ENCODE measurements at regions of chr2 and their contacts with region 1.

Region 1: DNA sequence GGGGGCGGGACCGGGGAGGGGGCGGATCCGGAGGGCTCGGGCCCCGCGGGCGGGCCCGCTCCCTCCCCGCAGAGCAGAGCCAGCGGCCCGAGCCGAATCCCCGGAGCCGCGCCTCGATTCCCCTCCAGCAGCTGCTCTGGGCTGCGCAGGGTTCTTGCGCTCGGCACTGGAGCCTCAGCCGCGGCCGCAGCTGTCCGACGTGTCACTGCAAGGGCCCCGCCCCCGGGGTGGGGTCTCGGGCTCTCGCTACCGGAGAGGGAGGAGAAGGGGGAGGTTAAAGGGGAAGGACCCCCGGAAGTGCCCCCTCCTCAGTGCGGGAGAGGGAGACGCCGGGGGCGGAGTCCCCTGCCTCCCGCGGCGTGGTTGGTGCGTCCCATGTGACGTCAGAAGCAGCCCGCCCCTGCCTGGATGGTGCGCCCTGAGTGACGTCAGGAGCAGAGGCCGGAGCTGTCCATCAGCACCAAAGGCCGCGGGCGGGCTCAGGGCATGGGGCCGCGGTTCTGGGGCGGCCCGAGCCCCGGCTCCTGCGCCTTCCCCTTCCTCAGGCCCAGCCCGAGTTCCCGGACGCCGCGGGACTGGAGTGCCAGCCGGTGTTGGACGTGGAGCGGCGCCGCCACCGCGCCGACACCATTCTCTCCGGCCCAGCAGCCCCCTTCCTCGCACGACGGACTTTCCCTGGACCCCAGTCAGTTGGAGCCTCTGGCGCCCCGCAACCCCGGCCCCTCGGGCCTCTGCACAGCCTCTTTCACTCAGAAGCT is at the starts of genes CHPF and TMEM198:
- DNase-seq: peak; percentile 87 to 96
- ATAC-seq: peak; percentile 66 to 78
- H3K4me3 ChIP-seq: peak within 1 kb of the TSS; percentile 61
- H3K27ac ChIP-seq: peak within 1 kb of the TSS; percentile 58 to 89
- H3K4me1 ChIP-seq: peaks cover 12% of the 10 kb centered on the region
- CTCF ChIP-seq: no peak
- EP300 ChIP-seq: no peak
- POLR2A ChIP-seq: no peak; the same call in 1 of the 2 replicates
- RAD21 ChIP-seq: no peak
- polyA plus RNA-seq, gene CHPF: 9.0 and 10.2 TPM in 2 replicates
- polyA plus RNA-seq, gene TMEM198: 0.31 and 0.33 TPM in 2 replicates

Region 2: GRCh38 chr2:219521066-219521880 is 22.5 kb before region 1 on chr2:
- CTCF ChIA-PET with region 1: interaction called, 164 read pairs
- POLR2A ChIA-PET with region 1: no interaction called
- DNase-seq: peak; percentile 60 to 87
- ATAC-seq: peak; percentile 76 to 94
- H3K4me3 ChIP-seq: 0 out of 3 replicates have a peak overlapping the region, but pooled peaks have one; percentile 9
- H3K27ac ChIP-seq: peak overlapping the region; percentile 15 to 80; a peak in 4 of 6 replicates
- H3K4me1 ChIP-seq: peaks cover 17% of the 10 kb centered on the region
- CTCF ChIP-seq: peak; percentile 70
- EP300 ChIP-seq: no peak
- POLR2A ChIP-seq: no peak
- RAD21 ChIP-seq: peak; percentile 57 to 60

Region 3: DNA sequence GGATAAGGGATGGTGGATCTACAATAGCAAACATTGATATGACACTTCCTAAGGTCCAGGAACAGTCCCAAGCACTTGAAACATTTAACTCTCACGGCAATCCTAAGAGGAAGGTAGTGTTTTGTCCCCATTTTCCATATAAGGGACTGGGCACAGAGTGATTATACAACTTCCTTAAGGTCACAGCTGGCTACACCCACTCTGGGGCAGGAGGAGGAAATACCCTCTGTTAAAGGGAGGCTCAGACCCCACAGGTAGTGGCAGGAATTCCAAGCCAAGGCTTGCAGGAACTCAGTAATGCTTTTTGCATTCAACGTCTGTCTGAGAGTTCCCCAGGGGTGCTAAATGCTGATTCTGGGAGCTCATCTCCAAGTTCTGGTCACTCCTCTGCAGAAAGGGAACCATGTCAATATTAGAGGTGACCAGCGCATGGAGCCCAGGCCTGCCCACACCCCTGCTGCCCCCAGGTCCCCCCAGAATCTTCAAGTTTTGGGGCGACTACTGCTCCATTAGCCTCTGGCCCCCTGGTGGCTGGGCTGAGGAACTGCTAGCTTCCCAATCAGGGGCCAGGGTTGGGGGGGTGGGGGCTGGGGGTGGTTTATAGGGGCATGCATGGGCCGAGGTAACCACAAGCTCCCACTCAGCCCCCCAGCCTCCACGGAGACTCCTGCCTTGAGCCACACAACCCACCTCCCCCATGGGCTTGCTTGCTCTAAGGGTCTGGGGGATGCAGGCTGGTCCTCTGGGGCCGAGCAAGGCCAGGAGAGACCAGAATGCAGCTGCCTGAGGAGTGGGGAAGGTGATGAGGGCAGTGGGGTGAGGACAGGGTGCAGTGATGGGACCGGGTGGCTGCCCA is 16.5 kb after region 1 on chr2:
- CTCF ChIA-PET with region 1: interaction called, 77 read pairs
- POLR2A ChIA-PET with region 1: no interaction called
- DNase-seq: peak in 1 of 2 experiments; percentile 47
- ATAC-seq: peak; percentile 12 to 66; a peak in 4 of 6 replicates
- H3K4me3 ChIP-seq: no peak overlapping the region
- H3K27ac ChIP-seq: no peak overlapping the region
- H3K4me1 ChIP-seq: no peaks in the 10 kb centered on the region
- CTCF ChIP-seq: peak; percentile 63
- EP300 ChIP-seq: no peak
- POLR2A ChIP-seq: no peak
- RAD21 ChIP-seq: no peak

Region 4: DNA sequence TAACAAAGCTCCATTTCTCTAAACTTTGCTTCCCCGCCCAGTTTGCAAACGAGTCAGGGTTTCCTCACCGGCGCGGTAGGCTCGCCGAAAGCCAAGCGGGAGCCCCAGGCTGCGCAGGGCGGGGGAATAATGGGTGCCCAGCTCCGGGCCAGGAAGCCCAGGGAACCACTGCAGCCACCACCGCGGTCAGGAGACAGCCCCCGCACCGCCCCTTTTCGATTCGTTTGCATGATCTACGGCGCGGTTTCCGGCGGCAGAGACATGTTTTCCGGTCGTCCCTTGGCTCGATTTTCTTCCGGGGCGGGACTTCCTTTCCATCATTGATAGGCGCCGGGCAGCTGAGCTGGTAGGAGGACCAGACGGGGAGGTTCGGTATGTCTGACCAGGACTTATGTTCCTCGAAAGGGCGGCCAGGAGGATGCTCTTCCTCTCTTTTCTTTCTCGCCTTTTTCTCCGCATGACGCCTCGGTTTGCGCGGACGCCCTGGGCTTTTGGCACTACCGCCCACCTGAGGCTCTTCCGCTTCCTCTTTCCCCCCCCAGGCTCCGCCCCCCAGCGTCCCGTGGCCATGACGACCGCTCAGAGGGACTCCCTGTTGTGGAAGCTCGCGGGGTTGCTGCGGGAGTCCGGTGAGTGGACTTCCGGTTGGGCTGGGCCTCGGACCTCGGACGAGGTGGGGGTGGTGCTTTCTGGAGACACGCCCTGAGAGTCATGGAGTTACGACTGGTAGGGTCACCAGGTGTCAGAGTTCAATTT is 54.0 kb after region 1 on chr2 and contains the start of gene STK11IP:
- CTCF ChIA-PET with region 1: interaction called, 18 read pairs
- POLR2A ChIA-PET with region 1: interaction called, 5 read pairs
- DNase-seq: peak; percentile 98 to 99
- ATAC-seq: peak; percentile 96 to 97
- H3K4me3 ChIP-seq: peak within 1 kb of the TSS; percentile 71
- H3K27ac ChIP-seq: peak within 1 kb of the TSS; percentile 90 to 94
- H3K4me1 ChIP-seq: peaks cover 11% of the 10 kb centered on the region; the same call in 2 of the 3 replicates
- CTCF ChIP-seq: no peak
- EP300 ChIP-seq: no peak
- POLR2A ChIP-seq: peak; percentile 93
- RAD21 ChIP-seq: no peak
- polyA plus RNA-seq, gene STK11IP: 13.3 and 18.4 TPM in 2 replicates

Region 5: DNA sequence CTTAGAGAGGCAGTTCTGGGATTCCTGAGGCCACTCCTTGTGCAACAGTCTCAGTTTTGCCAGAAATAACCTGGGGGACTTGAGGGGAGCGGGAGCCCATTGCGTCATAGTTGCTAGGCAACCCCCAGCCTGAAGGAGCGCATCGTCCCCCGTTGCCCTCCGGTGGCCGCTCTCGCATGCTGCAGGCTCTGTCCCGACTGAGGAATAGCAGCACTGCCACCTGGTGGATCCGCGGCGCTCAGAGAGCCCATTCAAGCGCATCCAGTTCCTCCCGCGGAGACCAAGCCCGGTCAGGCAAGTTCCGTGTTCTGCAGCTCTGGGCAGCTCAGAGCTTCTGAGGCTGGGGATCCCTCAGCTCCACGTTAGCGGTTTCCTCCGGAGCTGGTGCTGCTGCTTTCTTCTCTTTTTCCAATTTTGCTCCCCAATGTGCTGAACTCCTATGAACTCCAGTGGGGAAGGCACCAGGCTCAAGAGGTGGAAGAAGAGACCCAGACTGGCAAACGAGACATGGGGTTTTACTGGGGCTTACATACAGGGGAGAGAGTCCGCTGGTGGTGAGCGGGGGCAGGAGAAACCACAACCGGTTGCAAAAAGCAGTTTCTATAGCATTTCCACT is 98.8 kb after region 1 on chr2:
- CTCF ChIA-PET with region 1: interaction called, 68 read pairs
- POLR2A ChIA-PET with region 1: no interaction called
- DNase-seq: peak; percentile 85 to 94
- ATAC-seq: peak; percentile 82 to 95
- H3K4me3 ChIP-seq: no peak overlapping the region
- H3K27ac ChIP-seq: no peak overlapping the region
- H3K4me1 ChIP-seq: peaks cover 10% of the 10 kb centered on the region; the same call in 2 of the 3 replicates
- CTCF ChIP-seq: peak; percentile 97
- EP300 ChIP-seq: no peak
- POLR2A ChIP-seq: no peak
- RAD21 ChIP-seq: peak; percentile 90

Region 6: GRCh38 chr2:219722349-219722776 is 178.6 kb after region 1 on chr2:
- CTCF ChIA-PET with region 1: no interaction called
- POLR2A ChIA-PET with region 1: no interaction called
- DNase-seq: no peak
- ATAC-seq: peak in 1 of 2 experiments; percentile 30; a peak in 2 of 6 replicates
- H3K4me3 ChIP-seq: no peak overlapping the region
- H3K27ac ChIP-seq: no peak overlapping the region
- H3K4me1 ChIP-seq: no peaks in the 10 kb centered on the region
- CTCF ChIP-seq: no peak
- EP300 ChIP-seq: no peak
- POLR2A ChIP-seq: no peak
- RAD21 ChIP-seq: no peak

Region 7: GRCh38 chr2:219983836-219984235 is 440.1 kb after region 1 on chr2:
- CTCF ChIA-PET with region 1: no interaction called
- POLR2A ChIA-PET with region 1: no interaction called
- DNase-seq: no peak
- ATAC-seq: no peak
- H3K4me3 ChIP-seq: no peak overlapping the region
- H3K27ac ChIP-seq: no peak overlapping the region
- H3K4me1 ChIP-seq: no peaks in the 10 kb centered on the region
- CTCF ChIP-seq: no peak
- EP300 ChIP-seq: no peak
- POLR2A ChIP-seq: no peak
- RAD21 ChIP-seq: no peak

Measured in A549 (cell line).